ENCODE measurements at regions of chr1 and their contacts with region 1.

Region 1: GRCh38 chr1:28088168-28088961 is at the start of gene EYA3:
- DNase-seq: peak; percentile 98
- ATAC-seq: peak; percentile 92
- H3K4me3 ChIP-seq: peak within 1 kb of the TSS; percentile 82
- H3K27ac ChIP-seq: peak within 1 kb of the TSS; percentile 75
- H3K4me1 ChIP-seq: peaks cover 22% of the 10 kb centered on the region
- H3K27me3 ChIP-seq: no peaks in the 10 kb centered on the region
- CTCF ChIP-seq: no peak
- total RNA-seq, gene EYA3: 17.1 and 17.3 TPM in 2 replicates

Region 2: GRCh38 chr1:27858072-27858958 is 230.1 kb before region 1 on chr1:
- CTCF ChIA-PET with region 1: no interaction called
- POLR2A ChIA-PET with region 1: no interaction called
- intact Hi-C with region 1: loop called (anchors 5 kb)
- DNase-seq: peak; percentile 95
- ATAC-seq: peak; percentile 91
- H3K4me3 ChIP-seq: no peak overlapping the region
- H3K27ac ChIP-seq: no peak overlapping the region
- H3K4me1 ChIP-seq: peaks cover 16% of the 10 kb centered on the region
- H3K27me3 ChIP-seq: no peaks in the 10 kb centered on the region
- CTCF ChIP-seq: peak; percentile 98

Region 3: DNA sequence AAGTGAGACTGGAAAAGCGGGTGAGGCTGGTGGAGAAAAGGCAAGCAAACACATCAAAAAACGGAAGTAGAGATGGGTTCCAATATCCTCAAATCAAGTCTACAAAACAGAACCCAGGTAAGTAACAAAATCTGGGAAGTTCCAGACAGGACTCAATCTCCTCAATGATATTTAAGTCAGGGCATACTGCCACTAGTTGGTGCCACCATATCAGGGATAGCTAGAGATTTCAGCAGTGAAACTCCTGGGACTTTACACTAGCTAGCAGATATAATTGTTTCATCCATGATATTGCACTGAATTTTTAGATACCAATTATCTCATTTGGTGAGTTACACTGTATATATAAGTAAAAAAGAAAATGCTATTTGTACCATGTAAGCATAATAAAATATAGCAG is 51.9 kb before region 1 on chr1:
- CTCF ChIA-PET with region 1: interaction called, 3 read pairs
- POLR2A ChIA-PET with region 1: no interaction called
- intact Hi-C with region 1: loop called (anchors 5 kb)
- DNase-seq: peak; percentile 29
- ATAC-seq: peak; percentile 63; the same call in 1 of the 2 replicates
- H3K4me3 ChIP-seq: no peak overlapping the region
- H3K27ac ChIP-seq: no peak overlapping the region
- H3K4me1 ChIP-seq: peaks cover under 1% of the 10 kb centered on the region; the same call in 1 of the 2 replicates
- H3K27me3 ChIP-seq: no peaks in the 10 kb centered on the region
- CTCF ChIP-seq: peak; percentile 48

Region 4: GRCh38 chr1:28156821-28157220 is 68.5 kb after region 1 on chr1:
- CTCF ChIA-PET with region 1: interaction called, 12 read pairs
- POLR2A ChIA-PET with region 1: no interaction called
- intact Hi-C with region 1: loop called (anchors 5 kb)
- DNase-seq: no peak
- ATAC-seq: no peak
- H3K4me3 ChIP-seq: no peak overlapping the region
- H3K27ac ChIP-seq: no peak overlapping the region
- H3K4me1 ChIP-seq: peaks cover 14% of the 10 kb centered on the region
- H3K27me3 ChIP-seq: no peaks in the 10 kb centered on the region
- CTCF ChIP-seq: no peak

Region 5: DNA sequence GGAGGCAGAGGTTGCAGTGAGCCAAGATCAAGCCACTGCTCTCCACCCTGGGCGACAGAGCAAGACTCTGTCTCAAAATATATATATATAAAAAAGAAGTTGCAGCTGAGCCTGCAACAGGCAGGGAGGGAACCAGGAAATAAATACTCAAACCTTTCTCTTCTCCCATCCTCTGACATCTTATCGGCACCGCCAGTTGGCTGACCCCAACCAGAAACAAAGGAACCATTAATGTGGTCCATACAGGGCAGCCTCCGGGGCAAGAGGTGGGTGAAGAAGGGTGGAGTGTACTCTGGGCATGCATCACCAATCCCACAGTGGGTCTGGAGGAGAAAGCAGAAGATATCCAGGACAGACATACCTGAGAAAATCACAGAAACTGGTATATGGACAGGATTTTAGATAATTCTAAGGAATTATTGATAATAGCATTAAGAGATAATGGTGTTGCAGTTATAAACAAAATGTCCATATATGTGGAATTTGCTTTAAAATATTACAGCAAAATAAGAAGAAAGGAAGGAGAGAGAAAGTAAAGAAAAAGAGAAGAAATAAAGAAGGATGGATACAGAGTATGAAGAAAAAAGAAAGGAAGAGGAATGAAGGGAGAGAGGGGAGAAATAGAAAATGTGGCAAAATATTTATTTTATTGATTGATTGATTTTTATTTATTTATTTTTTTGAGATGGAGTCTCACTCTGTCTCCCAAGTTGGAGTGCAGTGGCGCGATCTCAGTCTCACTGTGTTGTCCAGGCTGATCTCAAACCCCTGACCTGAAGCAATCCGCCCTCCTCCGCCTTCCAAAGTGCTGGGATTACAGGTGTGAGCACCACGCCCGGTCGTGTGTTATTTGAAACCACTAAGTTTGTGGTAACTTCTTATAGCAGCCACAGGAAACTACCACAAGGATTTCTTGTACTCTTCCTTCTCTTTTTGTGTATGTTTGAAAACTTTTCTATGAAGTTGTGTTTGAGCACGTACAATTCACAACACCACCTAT is 92.2 kb after region 1 on chr1:
- CTCF ChIA-PET with region 1: no interaction called
- POLR2A ChIA-PET with region 1: no interaction called
- intact Hi-C with region 1: loop called (anchors 1 kb)
- DNase-seq: no peak
- ATAC-seq: no peak; the same call in 1 of the 2 replicates
- H3K4me3 ChIP-seq: no peak overlapping the region
- H3K27ac ChIP-seq: no peak overlapping the region
- H3K4me1 ChIP-seq: no peaks in the 10 kb centered on the region
- H3K27me3 ChIP-seq: no peaks in the 10 kb centered on the region
- CTCF ChIP-seq: no peak

Region 6: GRCh38 chr1:28208818-28209441 is 120.6 kb after region 1 on chr1:
- CTCF ChIA-PET with region 1: interaction called, 18 read pairs
- POLR2A ChIA-PET with region 1: no interaction called
- intact Hi-C with region 1: loop called (anchors 1 kb)
- DNase-seq: peak; percentile 80
- ATAC-seq: peak; percentile 88
- H3K4me3 ChIP-seq: no peak overlapping the region
- H3K27ac ChIP-seq: no peak overlapping the region
- H3K4me1 ChIP-seq: no peaks in the 10 kb centered on the region
- H3K27me3 ChIP-seq: no peaks in the 10 kb centered on the region
- CTCF ChIP-seq: peak; percentile 91